ENCODE measurements at regions of chr20 and their contacts with region 1.

Region 1: GRCh38 chr20:3115190-3116107 is 30.9 kb upstream of the AVP start:
- DNase-seq: no peak
- ATAC-seq: peak; percentile 74
- H3K4me3 Mint-ChIP-seq: no peak overlapping the region
- H3K27ac Mint-ChIP-seq: no peak overlapping the region
- H3K4me1 Mint-ChIP-seq: peaks cover 9% of the 10 kb centered on the region
- H3K27me3 Mint-ChIP-seq: no peaks in the 10 kb centered on the region
- CTCF ChIP-seq: peak; percentile 94

Region 2: GRCh38 chr20:3045816-3046676 is 69.4 kb before region 1 on chr20 and contains the start of gene MRPS26:
- CTCF ChIA-PET with region 1: interaction called, 3 read pairs
- POLR2A ChIA-PET with region 1: no interaction called
- intact Hi-C with region 1: loop called (anchors 5 kb)
- DNase-seq: peak; percentile 89
- ATAC-seq: peak; percentile 94
- H3K4me3 Mint-ChIP-seq: peak within 1 kb of the TSS; percentile 85
- H3K27ac Mint-ChIP-seq: peak within 1 kb of the TSS; percentile 78
- H3K4me1 Mint-ChIP-seq: peaks cover 20% of the 10 kb centered on the region
- H3K27me3 Mint-ChIP-seq: no peaks in the 10 kb centered on the region
- CTCF ChIP-seq: no peak
- total RNA-seq, gene MRPS26: 63.6 to 70.0 TPM

Region 3: GRCh38 chr20:3051385-3052019 is 63.9 kb before region 1 on chr20:
- CTCF ChIA-PET with region 1: interaction called, 17 read pairs
- POLR2A ChIA-PET with region 1: interaction called, 3 read pairs
- intact Hi-C with region 1: loop called (anchors 5 kb)
- DNase-seq: no peak
- ATAC-seq: no peak
- H3K4me3 Mint-ChIP-seq: no peak overlapping the region
- H3K27ac Mint-ChIP-seq: peak overlapping the region; percentile 34
- H3K4me1 Mint-ChIP-seq: peaks cover 17% of the 10 kb centered on the region
- H3K27me3 Mint-ChIP-seq: no peaks in the 10 kb centered on the region
- CTCF ChIP-seq: no peak

Region 4: DNA sequence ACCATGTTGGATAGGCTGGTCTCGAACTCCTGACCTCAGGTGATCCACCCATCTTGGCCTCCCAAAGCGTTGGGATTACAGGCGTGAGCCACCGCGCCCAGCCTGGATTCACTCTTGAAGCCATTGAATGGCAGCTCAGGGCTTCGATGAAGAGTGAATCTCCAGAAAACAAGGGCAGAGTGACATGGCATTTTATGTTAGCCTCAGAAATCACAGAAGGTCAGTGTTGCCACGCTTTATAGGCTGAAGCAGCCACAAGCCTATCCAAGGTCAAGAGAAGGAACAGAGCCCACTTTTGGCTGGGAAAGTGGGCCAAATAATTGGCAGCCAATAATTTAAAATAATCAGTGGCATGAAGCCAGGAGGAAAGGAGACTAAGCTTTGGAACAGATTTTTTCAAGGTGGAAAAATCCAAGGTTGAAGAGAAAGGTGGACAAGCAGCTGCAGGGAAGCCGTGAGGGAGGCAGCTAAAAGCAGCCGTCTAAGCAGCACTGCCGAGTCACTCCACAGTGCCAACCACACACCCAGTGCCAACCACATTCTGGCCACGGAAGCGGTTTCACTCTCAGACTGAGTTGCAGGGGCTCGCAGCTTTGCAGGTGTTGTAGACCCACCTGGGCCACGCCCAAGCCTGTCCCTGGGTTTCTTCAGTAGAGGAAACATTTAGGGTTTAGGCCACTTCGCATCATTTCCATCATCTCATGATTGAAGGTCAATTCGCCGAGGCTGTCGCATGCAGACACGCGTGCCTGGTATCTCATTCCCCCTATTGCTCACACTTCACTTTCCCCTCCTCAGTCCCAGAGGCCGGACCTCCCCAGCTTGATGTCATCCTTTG is 13.5 kb before region 1 on chr20:
- CTCF ChIA-PET with region 1: interaction called, 16 read pairs
- POLR2A ChIA-PET with region 1: no interaction called
- intact Hi-C with region 1: no loop called
- DNase-seq: peak; percentile 92
- ATAC-seq: peak; percentile 87
- H3K4me3 Mint-ChIP-seq: no peak overlapping the region
- H3K27ac Mint-ChIP-seq: no peak overlapping the region
- H3K4me1 Mint-ChIP-seq: peaks cover 16% of the 10 kb centered on the region
- H3K27me3 Mint-ChIP-seq: no peaks in the 10 kb centered on the region
- CTCF ChIP-seq: no peak

Region 5: DNA sequence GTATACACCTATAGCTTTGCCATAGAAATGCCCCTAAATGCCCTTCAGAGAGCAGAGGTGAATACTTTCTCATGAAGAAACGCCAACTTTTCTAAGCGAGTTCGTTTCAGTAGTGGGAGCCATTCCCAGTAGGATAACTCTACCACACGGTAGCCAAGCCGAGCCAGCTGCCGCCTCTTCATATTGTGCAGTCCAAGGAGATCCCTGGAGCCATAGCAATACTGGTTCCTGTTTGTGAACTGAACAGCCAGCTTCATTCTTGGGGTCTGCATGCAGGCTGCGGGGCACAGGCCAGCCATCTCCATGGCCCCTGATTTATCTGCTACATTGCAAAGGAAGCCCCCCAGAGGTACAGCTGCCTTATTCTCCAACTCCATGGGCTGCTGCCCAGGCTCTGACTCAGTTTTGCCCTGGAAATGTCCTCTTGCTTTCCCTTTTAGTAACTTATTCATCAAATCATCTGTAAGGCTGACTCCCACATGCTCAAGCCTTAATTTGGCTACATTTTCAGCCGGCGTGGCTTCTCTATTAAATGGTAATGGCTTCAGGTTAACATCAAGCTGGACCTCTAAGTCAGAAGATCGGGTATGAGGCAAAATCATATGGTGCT is 31.4 kb after region 1 on chr20:
- CTCF ChIA-PET with region 1: interaction called, 10 read pairs
- POLR2A ChIA-PET with region 1: no interaction called
- intact Hi-C with region 1: no loop called
- DNase-seq: no peak
- ATAC-seq: no peak
- H3K4me3 Mint-ChIP-seq: no peak overlapping the region
- H3K27ac Mint-ChIP-seq: no peak overlapping the region
- H3K4me1 Mint-ChIP-seq: peaks cover 39% of the 10 kb centered on the region
- H3K27me3 Mint-ChIP-seq: no peaks in the 10 kb centered on the region
- CTCF ChIP-seq: no peak

Region 6: GRCh38 chr20:3181270-3181669 is 65.8 kb after region 1 on chr20:
- CTCF ChIA-PET with region 1: no interaction called
- POLR2A ChIA-PET with region 1: no interaction called
- intact Hi-C with region 1: no loop called
- DNase-seq: no peak
- ATAC-seq: no peak
- H3K4me3 Mint-ChIP-seq: no peak overlapping the region
- H3K27ac Mint-ChIP-seq: no peak overlapping the region
- H3K4me1 Mint-ChIP-seq: no peaks in the 10 kb centered on the region
- H3K27me3 Mint-ChIP-seq: no peaks in the 10 kb centered on the region
- CTCF ChIP-seq: no peak

Region 7: DNA sequence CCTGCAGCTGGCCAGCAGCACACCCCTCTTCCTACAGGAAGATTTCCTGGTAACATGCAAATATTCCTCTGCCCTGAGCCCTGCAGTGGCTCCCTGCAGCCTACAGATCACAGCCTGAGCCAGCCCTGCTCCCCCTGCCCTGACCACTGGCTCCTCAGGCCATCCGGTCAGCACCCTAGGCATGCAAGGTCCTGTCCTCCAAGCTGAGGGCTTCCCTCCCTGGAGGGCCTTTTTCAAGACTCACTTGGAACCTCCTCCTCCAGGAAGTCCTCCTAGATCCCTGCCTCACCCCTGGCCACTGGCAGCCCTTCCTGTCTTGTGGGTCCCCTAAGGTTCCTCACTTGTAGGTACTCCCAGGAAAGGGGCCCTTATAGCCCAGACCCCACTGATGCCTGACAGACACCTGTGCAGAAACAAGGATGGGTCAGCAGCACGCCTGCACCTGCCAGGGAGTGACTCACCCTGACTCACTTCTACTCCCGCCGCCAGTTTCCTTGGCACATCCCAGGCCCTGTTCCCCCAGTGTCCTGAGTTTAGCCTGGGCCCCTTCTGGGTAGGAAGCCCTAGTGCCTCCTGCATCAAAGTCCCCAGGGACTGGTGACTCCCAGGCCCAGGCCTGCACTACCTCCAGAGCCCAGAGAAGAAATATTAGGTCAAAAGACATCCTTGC is 120.3 kb after region 1 on chr20:
- CTCF ChIA-PET with region 1: no interaction called
- POLR2A ChIA-PET with region 1: no interaction called
- intact Hi-C with region 1: no loop called
- DNase-seq: no peak
- ATAC-seq: no peak
- H3K4me3 Mint-ChIP-seq: no peak overlapping the region
- H3K27ac Mint-ChIP-seq: no peak overlapping the region
- H3K4me1 Mint-ChIP-seq: peaks cover 6% of the 10 kb centered on the region
- H3K27me3 Mint-ChIP-seq: peaks cover 38% of the 10 kb centered on the region
- CTCF ChIP-seq: no peak